Right ventricle myocardium inferior (tissue), 1 donor: ENCODE measurements at regions of chr7 and their contacts with region 1.

Region 1: GRCh38 chr7:25069900-25070443 is 55.1 kb downstream of the CYCS start:
- DNase-seq: no peak
- ATAC-seq: peak; percentile 62

Region 2: GRCh38 chr7:24819916-24820689 is 249.9 kb before region 1 on chr7:
- intact Hi-C with region 1: loop called (anchors 1 kb)
- DNase-seq: peak; percentile 81
- ATAC-seq: peak; percentile 90

Region 3: DNA sequence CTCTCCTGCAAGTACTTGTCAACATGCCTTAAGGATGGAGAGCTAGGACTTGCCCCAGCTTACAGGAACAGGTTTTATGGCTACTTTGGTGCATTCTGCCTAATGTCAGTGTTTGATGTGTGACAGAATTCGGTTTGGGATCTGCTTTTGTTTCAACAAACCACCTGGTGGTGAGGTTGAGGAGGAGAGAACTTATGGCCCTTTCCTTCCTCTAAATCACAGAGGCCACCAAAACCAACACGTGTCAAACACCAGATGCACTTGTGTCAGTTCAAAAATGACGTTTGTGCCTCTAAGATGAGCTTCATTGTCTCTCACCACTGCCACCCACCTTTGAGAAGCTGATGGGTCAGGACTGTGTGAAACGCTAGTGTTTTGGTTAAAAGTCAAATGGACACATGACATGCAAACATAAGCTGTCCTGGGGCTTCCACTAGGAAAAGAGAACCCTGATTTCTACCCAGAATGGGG is 173.9 kb before region 1 on chr7:
- intact Hi-C with region 1: loop called (anchors 5 kb)
- DNase-seq: no peak
- ATAC-seq: no peak